ENCODE measurements at regions of chr2 and their contacts with region 1.

Region 1: DNA sequence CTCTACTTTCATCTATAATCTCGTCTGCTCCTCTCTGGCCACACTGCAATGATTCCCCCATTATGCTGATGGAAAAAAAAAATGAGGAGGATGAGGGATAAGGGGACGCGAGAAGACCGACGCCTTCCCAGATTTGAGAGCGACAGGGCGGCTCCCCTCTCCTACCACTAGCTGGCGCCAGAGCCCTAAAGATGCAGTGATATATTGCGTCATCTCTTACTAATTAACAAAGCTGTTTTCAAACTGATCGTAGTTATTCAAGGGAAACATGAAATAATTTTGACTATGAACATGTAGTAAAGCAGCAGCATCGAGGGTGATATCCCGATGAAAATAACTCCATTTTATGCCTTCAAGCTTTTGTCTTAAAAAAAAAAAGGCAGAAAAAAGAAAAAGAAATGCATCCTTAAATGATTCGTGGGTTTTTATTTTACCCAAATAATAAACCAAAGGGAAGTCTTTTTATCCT is 48.0 kb upstream of the HNRNPA3 start:
- DNase-seq: peak; percentile 91

Region 2: DNA sequence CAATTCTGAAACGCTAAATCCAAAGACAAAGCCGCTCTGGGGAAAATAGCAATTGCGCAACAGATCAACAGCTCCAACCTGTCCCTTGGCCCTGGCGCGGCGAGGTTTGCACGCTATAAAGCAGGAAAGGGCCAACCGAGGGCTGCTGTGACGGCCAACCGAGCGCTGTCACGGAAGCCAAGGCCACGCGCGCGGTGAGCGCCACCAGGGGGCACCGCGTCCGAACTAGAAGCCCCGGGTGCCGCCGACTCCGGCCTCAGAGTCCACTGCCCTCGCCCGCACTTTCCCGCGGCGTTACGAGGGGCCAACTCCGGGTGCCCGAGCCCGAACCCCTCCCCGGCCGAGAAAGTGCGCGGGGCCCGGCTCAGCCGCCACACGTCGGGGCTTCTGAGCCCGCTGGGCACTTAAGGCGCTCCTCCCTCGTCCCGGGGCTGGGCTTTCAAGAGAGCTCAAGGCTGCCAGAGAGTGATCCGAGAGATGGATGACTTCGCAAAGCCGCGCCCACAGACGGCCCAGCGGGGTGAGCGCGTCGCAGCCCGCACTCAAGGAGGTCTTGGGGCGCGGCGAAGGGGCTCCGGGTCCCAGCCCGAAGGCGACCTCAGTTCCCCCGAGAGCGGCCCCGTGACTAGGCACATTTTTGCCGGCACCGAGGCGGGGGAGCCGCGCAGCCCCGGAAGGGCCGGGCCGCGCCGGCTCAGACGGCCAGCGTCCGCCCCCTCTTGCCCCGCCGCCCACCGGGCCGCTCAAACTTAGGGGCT is 99.0 kb after region 1 on chr2:
- intact Hi-C with region 1: loop called (anchors 1 kb)
- DNase-seq: peak; percentile 99

Region 3: DNA sequence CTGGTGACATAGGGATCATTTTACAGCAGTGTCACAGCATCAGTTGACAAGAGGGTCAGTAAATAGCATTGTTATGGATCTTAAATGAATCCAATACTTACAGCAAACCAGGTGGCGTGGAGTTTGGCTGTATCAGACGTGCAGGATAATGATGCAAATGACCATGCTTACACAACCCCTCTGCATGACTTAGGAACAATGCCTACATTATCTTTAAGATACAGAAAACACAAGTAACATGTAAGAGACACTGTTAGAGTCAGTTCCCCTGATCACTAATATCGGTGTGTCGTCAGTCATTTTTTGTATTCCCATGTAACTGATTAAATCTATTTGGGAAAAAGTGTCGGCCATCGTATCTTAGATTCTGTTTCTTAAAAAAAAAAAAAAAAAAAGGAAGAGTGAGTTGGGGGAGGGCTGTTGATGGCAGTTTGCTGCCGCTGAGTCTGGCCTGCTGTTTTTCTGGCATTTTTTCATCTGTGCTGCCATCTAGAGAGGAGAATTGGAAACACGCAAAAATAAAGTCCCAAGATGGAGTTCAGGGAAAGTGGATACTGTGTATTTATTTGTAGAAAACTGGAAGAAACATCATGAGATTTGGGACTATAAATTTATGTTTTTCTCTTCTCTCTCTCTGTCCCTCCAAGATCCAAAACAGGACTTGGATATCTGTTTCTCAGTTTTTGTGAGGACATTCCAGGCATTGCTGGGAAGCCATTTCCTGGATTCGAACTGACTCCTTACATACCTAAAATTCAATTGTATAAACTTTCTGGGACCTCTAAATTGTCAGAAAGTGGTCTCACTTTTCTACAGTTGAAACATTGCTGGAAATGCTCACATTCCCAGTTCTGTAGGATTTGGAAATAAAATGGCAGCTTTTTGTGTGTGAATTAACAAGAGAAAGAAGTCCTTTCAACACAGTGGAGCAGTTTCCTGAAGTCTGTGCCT is 167.7 kb after region 1 on chr2:
- intact Hi-C with region 1: loop called (anchors 1 kb)
- DNase-seq: no peak

Region 4: DNA sequence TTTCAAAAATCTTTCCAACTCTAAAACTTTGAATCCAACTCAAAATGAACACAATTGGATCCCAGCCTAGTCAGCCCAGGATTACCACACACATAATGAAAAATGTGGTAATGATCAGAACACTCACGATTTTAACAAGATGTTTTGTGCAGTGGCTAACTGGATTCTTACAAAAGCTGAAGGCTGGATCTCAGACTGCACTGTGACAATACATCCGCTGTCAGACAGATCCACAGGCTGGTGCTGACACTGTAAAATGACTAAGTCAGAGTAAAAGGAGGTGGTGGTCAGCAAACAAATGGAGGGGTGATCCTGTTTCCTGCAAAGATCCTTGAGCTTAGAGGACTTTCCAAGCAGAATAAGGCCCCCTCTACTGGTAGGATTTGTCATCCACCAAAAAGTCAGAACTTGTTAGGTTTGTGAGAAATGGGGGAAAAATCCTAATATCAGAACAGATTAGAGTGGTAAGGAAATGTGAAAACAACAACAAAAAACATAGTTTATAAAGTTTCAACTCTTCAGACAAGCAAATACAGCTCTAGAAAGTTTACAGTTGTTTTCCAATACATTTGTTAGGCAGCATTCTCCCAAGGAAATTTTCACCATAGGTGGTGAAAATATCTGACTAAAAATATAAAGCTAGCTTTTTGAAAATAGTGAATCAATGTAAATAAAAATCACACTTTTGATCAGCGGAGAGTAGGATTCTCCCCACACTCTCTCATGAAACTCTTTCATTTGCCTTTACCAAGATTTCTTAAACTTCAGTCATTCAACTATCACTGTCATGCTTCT is 439.9 kb after region 1 on chr2:
- intact Hi-C with region 1: loop called (anchors 5 kb)
- DNase-seq: no peak

Region 5: GRCh38 chr2:177666408-177666807 is 501.8 kb after region 1 on chr2:
- intact Hi-C with region 1: no loop called
- DNase-seq: no peak

Region 6: GRCh38 chr2:177763532-177764265 is 599.1 kb after region 1 on chr2:
- intact Hi-C with region 1: loop called (anchors 10 kb)
- DNase-seq: no peak